ENCODE measurements at regions of chr3 and their contacts with region 1.

Region 1: DNA sequence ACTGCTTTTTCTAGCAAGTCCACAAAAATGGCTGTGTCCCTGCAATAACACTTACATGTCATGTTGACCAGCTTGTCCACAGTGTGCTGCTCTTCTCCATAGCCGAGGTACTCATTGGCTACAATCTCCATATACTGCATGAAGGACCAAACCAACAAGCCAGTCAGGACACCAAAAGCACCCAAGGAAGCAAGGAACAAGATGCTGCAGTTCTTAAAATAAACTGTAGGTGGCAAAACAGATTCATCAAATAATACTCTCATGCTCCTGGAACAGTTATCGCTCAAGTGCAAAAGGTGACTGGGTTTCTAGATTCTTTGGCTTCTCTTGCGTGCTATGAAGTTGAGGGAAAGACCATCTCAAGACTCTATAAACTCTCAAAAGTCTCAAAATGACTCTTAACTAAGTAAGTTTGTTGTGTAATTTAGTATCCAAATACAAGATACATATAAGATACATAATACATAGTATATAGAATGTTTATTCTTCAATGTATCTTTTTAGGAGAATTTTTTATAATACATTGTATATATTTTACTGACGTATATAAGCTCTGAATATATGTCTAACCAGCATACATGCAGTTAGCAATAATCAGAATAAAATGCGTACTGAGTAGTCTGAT is 57.0 kb downstream of the NEK10 start:
- DNase-seq: no peak
- H3K4me3 ChIP-seq: no peak overlapping the region
- H3K27ac ChIP-seq: no peak overlapping the region
- H3K4me1 ChIP-seq: peaks cover 9% of the 10 kb centered on the region
- H3K27me3 ChIP-seq: no peaks in the 10 kb centered on the region
- CTCF ChIP-seq: peak; percentile 86

Region 2: GRCh38 chr3:27467545-27467944 is 155.4 kb after region 1 on chr3:
- intact Hi-C with region 1: loop called (anchors 5 kb)
- DNase-seq: no peak
- H3K4me3 ChIP-seq: no peak overlapping the region
- H3K27ac ChIP-seq: no peak overlapping the region
- H3K4me1 ChIP-seq: peaks cover 12% of the 10 kb centered on the region
- H3K27me3 ChIP-seq: no peaks in the 10 kb centered on the region
- CTCF ChIP-seq: peak; percentile 61

Region 3: DNA sequence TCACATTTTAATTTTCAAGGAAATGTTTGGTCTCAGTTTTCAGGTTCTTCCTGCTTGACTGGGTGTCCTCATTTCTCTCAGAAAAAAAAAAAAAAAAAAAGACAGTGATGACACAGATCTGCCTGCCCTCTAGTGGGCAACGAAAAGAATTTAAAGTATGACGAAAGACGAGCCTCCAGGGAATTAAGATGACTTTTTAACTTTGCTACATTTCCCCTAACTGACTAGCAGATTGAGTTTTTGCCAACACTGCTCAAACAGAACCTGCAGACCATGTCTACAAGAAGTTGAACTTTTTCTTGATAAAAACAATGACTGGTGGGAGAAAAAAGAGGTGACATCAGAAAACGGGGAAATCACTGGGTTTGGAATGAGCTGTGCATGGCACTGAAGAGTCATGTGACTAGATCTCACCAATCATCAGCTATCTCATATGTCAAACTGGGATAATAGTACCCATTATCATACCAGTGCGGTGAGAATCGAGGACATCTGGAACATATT is 369.1 kb after region 1 on chr3:
- intact Hi-C with region 1: loop called (anchors 10 kb)
- DNase-seq: no peak
- H3K4me3 ChIP-seq: peak overlapping the region; percentile 30
- H3K27ac ChIP-seq: no peak overlapping the region
- H3K4me1 ChIP-seq: no peaks in the 10 kb centered on the region
- H3K27me3 ChIP-seq: no peaks in the 10 kb centered on the region
- CTCF ChIP-seq: peak; percentile 68